ENCODE measurements at regions of chr13 and their contacts with region 1.

Region 1: GRCh38 chr13:99269627-99270241 is 11.6 kb upstream of the GPR18 start:
- DNase-seq: no peak
- H3K4me3 ChIP-seq: no peak overlapping the region
- H3K27ac ChIP-seq: no peak overlapping the region
- H3K4me1 ChIP-seq: no peaks in the 10 kb centered on the region
- H3K27me3 ChIP-seq: no peaks in the 10 kb centered on the region
- CTCF ChIP-seq: peak; percentile 34 to 52 (median 47)
- POLR2A ChIP-seq: no peak

Region 2: DNA sequence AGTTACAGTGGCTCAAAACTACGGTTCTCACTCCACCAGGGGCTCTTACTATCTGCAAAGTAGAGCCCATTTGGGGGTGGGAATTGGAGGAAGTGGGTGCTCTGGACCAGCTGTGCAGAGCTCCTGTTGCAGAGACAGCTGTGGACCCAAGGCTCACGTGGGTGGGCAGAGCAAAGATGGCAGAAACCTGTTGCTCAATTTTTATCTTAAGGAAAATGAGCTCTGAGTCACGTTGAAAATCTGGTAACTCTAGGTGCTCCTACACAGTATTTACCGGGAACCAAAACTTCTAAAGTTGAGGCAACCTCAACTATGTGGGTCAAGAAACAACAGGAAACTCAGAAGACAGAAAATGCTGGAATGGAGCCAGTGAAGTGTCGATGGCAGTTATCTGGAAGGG is 487.1 kb before region 1 on chr13:
- intact Hi-C with region 1: no loop called
- DNase-seq: no peak
- H3K4me3 ChIP-seq: no peak overlapping the region
- H3K27ac ChIP-seq: no peak overlapping the region
- H3K4me1 ChIP-seq: no peaks in the 10 kb centered on the region
- H3K27me3 ChIP-seq: no peaks in the 10 kb centered on the region
- CTCF ChIP-seq: no peak
- POLR2A ChIP-seq: no peak

Region 3: DNA sequence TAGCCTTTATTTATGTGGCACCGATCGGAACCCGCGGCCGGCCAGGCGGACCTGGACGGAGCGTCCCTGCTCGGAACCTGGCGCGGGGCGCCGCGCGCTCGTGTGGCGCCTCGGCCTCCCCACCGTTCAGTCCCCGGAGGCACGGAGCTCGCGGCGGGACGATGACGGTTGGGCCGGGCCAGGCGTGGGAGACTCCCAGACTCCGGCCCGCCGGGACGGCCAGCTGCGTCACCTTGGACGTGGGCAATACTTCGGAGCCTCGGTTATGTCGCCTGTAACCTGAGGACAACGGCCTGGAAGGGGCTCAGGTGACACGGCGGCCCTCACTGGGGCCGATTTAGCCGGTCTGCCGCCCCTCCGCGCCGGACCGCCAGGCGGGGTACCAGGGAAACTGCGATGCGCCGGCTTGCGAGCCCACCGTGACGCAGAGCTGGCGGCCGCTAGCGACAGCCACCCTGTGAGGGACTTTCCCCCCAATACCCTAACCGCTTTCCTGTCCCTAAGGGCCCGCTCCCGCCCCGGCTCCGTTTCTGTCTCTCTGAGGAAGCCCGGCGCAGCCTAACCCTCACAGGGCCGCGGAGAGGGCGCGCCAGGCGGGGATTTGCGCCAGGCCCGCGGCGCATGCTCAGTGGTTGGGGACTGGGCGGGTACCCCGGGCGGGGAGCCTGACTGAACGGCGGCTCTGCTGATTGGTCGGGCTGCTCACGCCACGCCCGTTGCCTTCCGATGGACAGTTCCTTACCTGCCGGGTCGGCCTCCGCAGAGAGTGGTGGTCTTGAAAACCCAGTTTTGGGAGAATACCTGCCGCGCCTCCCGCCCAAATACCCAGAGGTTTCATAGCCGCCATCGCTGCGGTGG is 182.4 kb before region 1 on chr13:
- intact Hi-C with region 1: no loop called
- DNase-seq: peak; percentile 86 to 91
- H3K4me3 ChIP-seq: peak overlapping the region; percentile 53 to 95
- H3K27ac ChIP-seq: peak overlapping the region; percentile 89 to 93
- H3K4me1 ChIP-seq: no peaks in the 10 kb centered on the region
- H3K27me3 ChIP-seq: no peaks in the 10 kb centered on the region
- CTCF ChIP-seq: peak in 3 of 4 experiments; percentile 13 to 54 (median 41)
- POLR2A ChIP-seq: peak; percentile 85 to 87

Region 4: DNA sequence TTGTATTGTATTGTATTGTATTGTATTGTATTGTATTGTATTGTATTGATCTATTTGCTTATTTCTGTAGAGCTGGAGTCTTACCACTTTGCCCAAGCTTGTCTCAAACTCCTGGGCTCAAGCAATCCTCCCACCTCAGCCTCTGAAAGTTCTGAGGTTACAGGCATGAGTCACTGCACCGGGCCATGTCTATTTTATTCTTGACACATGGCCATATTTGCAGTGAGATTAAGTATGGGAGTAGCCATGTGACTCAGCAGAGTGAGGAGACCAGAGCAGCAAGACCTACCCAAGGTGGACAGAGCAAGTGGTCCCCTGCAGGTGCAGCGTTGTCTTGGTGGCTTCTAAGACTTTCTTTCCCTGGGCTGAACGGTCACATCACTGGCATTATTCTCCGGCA is 118.2 kb before region 1 on chr13:
- intact Hi-C with region 1: no loop called
- DNase-seq: no peak
- H3K4me3 ChIP-seq: no peak overlapping the region
- H3K27ac ChIP-seq: no peak overlapping the region
- H3K4me1 ChIP-seq: no peaks in the 10 kb centered on the region
- H3K27me3 ChIP-seq: no peaks in the 10 kb centered on the region
- CTCF ChIP-seq: no peak
- POLR2A ChIP-seq: no peak

Region 5: DNA sequence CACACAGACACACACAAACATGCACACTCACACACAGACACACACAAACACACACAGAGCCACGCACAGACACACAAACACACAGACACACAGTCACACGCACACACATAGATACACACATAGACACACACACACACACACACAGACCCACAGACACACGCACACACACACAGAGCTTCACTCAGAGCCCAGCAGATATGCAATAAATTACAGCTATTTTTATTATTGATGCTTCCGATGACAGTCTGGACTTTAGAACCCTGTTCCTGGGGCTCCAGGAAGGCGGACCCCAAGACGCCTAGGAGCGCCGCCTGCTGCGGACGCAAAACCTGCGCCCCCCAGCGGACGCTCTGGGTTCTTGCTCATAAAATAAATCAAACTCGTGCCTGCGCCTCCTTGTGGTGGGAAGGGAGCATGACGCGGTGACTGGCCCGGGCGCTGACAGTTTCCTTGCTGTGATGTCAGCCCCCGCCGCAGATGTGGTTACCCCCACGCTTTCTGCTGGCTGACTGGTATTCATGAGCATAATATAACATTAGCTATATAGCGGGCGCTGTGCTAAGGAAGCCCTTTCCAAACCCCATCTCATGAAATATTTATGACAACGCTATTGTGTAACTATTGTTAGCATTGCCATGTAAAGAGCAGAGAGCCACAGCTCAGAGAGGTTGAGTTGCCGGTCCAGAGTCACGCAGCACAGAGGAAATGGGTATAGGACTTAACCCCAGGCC is 167.1 kb after region 1 on chr13:
- intact Hi-C with region 1: loop called (anchors 10 kb)
- DNase-seq: peak; percentile 78 to 80
- H3K4me3 ChIP-seq: no peak overlapping the region
- H3K27ac ChIP-seq: no peak overlapping the region
- H3K4me1 ChIP-seq: no peaks in the 10 kb centered on the region
- H3K27me3 ChIP-seq: no peaks in the 10 kb centered on the region
- CTCF ChIP-seq: peak; percentile 96 to 99 (median 98)
- POLR2A ChIP-seq: no peak

Region 6: DNA sequence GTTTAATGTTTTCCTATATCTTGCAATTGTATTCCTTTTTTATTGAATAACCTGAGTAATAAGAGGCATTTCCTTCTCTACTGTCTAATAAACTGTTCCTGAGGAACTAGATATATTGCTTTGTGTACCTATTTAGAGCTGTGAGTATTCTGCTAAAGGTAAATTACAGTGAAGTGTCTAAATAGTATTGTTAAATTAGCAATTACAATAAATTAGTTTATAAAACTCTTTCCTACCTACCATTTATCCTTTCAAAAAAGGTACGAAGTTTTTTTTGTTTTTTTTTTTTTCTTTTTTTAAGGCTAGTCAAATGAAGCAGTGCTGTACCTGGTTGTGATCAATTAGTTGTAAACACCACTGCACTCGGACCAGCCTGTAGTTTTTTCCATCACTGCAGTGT is 266.3 kb after region 1 on chr13:
- intact Hi-C with region 1: no loop called
- DNase-seq: no peak
- H3K4me3 ChIP-seq: no peak overlapping the region
- H3K27ac ChIP-seq: no peak overlapping the region
- H3K4me1 ChIP-seq: no peaks in the 10 kb centered on the region
- H3K27me3 ChIP-seq: no peaks in the 10 kb centered on the region
- CTCF ChIP-seq: no peak
- POLR2A ChIP-seq: no peak